AG04449 (cell line): ENCODE measurements at regions of chr7 and their contacts with region 1.

Region 1: GRCh38 chr7:2104107-2104710 is 128.5 kb downstream of the MAD1L1 start:
- DNase-seq: peak; percentile 54
- H3K4me3 ChIP-seq: no peak overlapping the region; the same call in 1 of the 2 replicates
- CTCF ChIP-seq: peak; percentile 90

Region 2: GRCh38 chr7:2082139-2082998 is 21.8 kb before region 1 on chr7:
- CTCF ChIA-PET with region 1: interaction called, 10 read pairs
- POLR2A ChIA-PET with region 1: no interaction called
- DNase-seq: peak; percentile 37
- H3K4me3 ChIP-seq: no peak overlapping the region
- CTCF ChIP-seq: no peak

Region 3: GRCh38 chr7:2093215-2093842 is 10.9 kb before region 1 on chr7:
- CTCF ChIA-PET with region 1: interaction called, 10 read pairs
- POLR2A ChIA-PET with region 1: no interaction called
- DNase-seq: no peak
- H3K4me3 ChIP-seq: no peak overlapping the region
- CTCF ChIP-seq: no peak

Region 4: GRCh38 chr7:2166625-2167280 is 62.5 kb after region 1 on chr7:
- CTCF ChIA-PET with region 1: no interaction called
- POLR2A ChIA-PET with region 1: no interaction called
- DNase-seq: no peak
- H3K4me3 ChIP-seq: no peak overlapping the region
- CTCF ChIP-seq: no peak